Activated naive CD4-positive, alpha-beta T cell treated with anti-CD3 and anti-CD28 coated beads for 36 hours (primary cell): ENCODE measurements at regions of chr6 and their contacts with region 1.

Region 1: DNA sequence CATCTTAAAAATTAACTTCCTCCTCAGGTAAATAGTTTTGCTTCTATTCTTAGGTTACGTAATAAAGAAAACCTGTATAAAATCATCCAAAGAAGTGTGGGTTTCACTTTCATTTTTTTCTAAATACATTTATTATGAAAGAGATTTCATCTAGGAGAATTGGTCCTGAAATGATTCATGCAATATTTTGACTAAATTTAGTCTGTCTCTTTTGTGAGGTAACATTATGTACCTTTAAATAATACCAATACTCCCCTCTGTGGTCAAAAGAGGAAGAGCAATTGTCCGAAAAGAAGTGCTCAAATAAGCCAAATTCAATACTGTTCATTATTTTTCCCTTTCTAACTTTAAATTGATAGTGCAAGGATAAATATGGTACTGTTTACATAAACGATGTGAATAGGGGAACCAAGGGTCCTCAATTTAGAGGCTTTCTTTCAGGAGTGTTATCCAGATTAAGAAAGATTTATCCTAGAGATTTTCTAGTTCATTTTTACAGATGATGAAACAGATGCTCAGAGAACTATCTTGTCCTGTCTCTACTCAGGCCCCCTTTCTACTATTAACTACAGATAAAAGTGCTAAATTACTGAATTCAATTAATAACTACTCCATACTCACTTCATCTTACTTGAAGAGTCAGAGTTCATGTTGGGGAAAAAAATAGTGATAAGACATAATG is 26.2 kb downstream of the CYP39A1 start:
- DNase-seq: no peak
- H3K4me3 Mint-ChIP-seq: no peak overlapping the region
- H3K27ac Mint-ChIP-seq: no peak overlapping the region
- H3K4me1 Mint-ChIP-seq: peaks cover 10% of the 10 kb centered on the region
- H3K27me3 Mint-ChIP-seq: peaks cover 3% of the 10 kb centered on the region

Region 2: GRCh38 chr6:45741437-45742171 is 884.8 kb before region 1 on chr6:
- CTCF ChIA-PET with region 1: no interaction called
- intact Hi-C with region 1: no loop called
- DNase-seq: no peak
- H3K4me3 Mint-ChIP-seq: no peak overlapping the region
- H3K27ac Mint-ChIP-seq: no peak overlapping the region
- H3K4me1 Mint-ChIP-seq: peaks cover 29% of the 10 kb centered on the region
- H3K27me3 Mint-ChIP-seq: peaks cover 2% of the 10 kb centered on the region

Region 3: GRCh38 chr6:46011241-46012085 is 614.9 kb before region 1 on chr6:
- CTCF ChIA-PET with region 1: no interaction called
- intact Hi-C with region 1: loop called (anchors 10 kb)
- DNase-seq: peak; percentile 78
- H3K4me3 Mint-ChIP-seq: no peak overlapping the region
- H3K27ac Mint-ChIP-seq: peak overlapping the region; percentile 72
- H3K4me1 Mint-ChIP-seq: peaks cover 45% of the 10 kb centered on the region
- H3K27me3 Mint-ChIP-seq: peaks cover 6% of the 10 kb centered on the region

Region 4: DNA sequence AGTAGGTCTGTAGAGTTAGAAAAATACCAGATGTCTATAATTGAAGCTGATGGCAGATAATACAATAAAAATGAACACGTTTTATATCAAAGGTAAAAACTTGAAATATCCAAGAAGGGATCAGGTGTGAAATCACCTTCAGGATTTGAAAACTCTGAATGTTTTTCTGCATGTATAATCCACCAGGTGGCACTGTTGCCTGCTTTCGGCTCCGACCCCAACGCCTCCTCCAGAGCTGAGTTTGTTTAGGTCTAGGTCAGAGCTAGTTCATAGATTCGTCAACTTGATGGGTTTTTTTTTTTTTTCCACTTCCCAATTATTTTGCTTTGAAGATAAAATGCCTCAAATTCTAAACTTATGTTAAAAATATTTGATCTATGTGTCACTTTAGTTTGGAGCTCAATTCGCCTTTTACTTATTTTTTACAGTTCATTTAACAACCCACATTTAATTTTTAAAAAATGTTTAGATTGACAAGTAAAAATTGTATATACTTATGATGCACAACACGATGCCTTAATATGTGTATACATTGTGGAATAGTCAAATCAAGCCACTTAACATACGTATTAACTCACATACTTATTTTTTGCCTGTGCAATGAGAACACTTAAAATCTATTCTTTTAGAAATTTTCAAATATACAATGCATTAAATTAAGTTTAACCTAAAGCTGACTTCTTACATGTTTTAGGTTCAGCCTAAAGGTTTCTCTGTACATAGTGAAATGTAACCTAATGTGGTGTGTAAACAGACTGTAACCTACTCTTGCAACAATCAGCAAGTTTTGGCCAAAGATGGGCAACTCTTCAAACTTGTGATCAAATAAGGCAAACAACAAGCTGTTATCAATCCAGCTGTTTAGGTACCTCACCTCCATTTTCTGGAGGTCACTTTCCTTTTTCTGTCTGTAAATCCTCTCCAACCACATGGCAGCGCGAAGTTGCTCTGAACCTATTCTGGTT is 536.0 kb before region 1 on chr6:
- CTCF ChIA-PET with region 1: interaction called, 3 read pairs
- intact Hi-C with region 1: loop called (anchors 1 kb)
- DNase-seq: peak; percentile 72
- H3K4me3 Mint-ChIP-seq: no peak overlapping the region
- H3K27ac Mint-ChIP-seq: no peak overlapping the region
- H3K4me1 Mint-ChIP-seq: no peaks in the 10 kb centered on the region
- H3K27me3 Mint-ChIP-seq: peaks cover 18% of the 10 kb centered on the region

Region 5: DNA sequence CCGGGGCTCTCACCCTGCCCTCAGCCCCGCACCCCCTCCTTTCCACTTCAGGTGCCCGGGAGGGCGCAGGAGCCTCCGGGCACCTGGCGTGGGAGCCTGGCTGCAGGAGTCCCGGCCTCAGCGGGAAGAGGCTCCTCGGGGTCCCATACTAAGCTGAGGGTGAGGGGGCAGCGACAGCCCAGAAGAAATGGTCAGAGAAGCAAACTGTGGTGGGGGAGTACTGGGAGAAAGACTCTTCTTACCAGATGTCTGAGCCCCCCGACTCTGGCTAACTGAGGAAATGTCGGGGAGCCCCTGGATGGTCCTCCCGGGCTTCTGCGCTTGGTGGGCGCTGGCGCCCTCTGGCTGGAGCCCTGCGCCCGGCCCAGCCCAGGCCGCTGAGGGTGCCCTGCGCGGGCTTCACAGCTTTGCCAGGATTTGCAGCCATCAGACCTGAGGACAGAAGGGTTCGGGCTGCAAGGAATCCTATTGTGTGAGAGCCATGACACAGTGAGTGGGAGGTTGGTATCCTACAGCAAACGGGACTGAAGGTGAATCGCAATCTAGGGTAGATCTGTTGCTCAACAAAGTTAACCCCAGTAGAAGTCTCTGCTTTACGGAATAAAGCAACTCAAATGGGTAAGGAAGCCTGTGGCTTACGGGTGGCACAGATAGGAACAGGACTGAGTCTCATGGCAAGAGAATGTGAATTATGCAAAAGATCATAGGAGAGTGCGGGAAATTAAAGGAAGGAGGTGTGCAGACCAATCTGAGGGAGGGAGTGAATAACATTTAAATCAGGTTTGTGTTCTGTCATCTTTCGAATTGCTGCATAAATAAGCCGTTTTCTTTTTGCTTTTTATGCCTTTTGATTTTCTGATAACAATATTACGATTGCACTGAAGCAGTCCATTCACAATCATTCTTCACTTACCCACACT is 134.5 kb before region 1 on chr6:
- CTCF ChIA-PET with region 1: no interaction called
- intact Hi-C with region 1: loop called (anchors 2 kb)
- DNase-seq: no peak
- H3K4me3 Mint-ChIP-seq: peak overlapping the region; percentile 12
- H3K27ac Mint-ChIP-seq: no peak overlapping the region
- H3K4me1 Mint-ChIP-seq: peaks cover 7% of the 10 kb centered on the region
- H3K27me3 Mint-ChIP-seq: peaks cover 58% of the 10 kb centered on the region

Region 6: DNA sequence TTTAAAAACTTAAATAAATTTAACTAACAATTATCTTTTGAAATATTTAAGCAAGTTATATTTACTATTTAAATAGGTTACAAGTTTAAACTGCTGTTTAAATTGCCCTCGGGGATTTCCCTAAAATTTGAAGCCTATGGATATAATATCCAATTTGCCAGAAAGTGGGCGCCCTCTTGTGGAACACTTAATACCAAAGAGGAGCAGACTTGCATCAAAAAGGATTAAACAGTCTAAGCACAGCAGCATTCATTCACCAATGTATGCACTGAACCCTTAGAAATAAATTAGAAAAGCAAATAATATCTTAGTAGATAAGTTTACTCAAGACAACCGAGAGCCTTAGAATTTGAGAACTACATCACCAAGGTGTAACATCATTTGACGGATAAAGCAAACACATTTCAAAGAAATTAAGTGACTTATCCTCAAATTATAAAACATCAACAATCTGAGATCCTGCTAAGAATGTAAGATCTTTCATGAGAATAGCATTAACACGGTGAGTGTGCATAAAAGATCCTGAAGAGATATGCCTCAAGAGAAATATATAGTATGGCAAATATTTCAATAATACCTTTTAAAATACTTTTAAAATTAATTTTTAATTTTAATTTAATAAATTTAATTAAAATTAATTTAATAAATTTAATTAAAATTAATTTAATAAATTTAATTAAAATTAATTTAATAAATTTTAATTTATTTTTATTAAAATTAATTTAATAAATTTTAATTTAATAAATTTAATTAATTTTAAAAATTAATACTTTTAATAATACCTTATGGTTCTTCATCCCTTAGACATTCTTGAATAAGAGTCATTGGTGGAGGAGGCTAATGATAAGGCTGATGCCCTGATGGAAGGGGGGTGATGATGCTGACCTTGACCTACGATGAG is 155.4 kb after region 1 on chr6:
- CTCF ChIA-PET with region 1: no interaction called
- intact Hi-C with region 1: loop called (anchors 10 kb)
- DNase-seq: peak; percentile 60
- H3K4me3 Mint-ChIP-seq: no peak overlapping the region
- H3K27ac Mint-ChIP-seq: no peak overlapping the region
- H3K4me1 Mint-ChIP-seq: no peaks in the 10 kb centered on the region
- H3K27me3 Mint-ChIP-seq: peaks cover 10% of the 10 kb centered on the region